Activated CD8-positive, alpha-beta memory T cell treated with anti-CD3 and anti-CD28 coated beads, Interleukin-2, amount 10 ng/mL, durations not matched to agents 7 days and 5 days (primary cell): ENCODE measurements at regions of chr20 and their contacts with region 1.

Region 1: DNA sequence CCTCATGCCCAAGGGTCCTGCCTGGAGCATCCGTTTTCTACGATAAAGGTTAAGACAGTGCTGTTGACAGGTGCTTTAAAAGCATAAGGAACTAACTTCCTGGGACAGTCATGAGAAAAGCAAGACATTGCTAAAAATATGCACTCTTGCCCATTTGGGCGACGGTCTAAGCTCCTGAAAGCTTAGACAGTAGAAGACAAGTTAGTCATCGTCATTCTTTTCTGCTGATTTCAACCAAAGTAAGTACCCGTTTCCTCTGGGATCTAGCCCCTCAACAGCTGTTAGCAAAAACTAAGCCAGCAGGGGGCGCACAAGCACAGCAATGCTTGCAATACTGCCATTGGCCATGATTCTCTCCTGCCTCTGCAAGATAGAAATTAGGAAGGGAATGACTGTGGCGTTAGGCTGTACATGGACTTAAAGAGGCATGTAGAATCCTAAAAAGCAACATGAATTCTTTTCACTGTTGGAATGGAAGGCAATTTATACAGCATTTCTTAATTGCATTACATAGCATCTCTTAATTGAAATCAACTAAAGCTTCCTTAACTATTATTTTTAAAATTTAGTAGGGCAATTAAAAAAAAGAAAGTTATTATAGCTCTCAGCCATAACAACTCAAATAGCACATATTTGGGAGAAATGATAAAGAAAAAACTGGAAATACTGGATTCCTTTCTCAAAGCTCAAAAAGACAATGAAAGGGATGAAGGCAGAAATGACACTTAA is 147.8 kb upstream of the RALGAPA2 start:
- DNase-seq: peak; percentile 87
- ATAC-seq: peak; percentile 76
- H3K4me3 Mint-ChIP-seq: no peak overlapping the region
- H3K27ac Mint-ChIP-seq: no peak overlapping the region
- H3K4me1 Mint-ChIP-seq: no peaks in the 10 kb centered on the region
- H3K27me3 Mint-ChIP-seq: peaks cover 16% of the 10 kb centered on the region

Region 2: DNA sequence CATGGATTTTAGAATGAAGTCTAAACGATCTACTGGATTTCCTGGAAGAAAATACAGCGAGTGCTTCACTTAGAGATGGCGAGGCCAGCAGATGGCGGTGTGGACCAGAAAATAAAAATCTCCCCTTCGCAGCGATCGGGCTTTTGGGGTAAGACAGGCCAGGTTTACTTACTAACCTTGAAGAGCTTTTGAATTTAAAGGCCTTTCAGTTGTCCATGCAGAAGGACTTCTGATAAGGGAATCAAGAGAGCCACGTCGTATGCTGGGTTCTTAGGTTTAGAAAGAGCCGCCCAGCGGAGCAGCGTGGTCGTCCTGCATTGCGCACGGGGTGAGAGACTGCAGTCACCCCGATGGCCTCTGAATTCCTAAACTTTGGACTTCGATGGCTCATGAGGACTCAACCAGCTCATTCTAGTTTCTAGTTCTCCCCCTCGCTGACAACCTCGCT is 22.6 kb before region 1 on chr20:
- CTCF ChIA-PET with region 1: interaction called, 19 read pairs
- DNase-seq: peak; percentile 52
- ATAC-seq: no peak
- H3K4me3 Mint-ChIP-seq: no peak overlapping the region
- H3K27ac Mint-ChIP-seq: no peak overlapping the region
- H3K4me1 Mint-ChIP-seq: no peaks in the 10 kb centered on the region
- H3K27me3 Mint-ChIP-seq: peaks cover 16% of the 10 kb centered on the region

Region 3: GRCh38 chr20:20875716-20876115 is 15.5 kb after region 1 on chr20:
- CTCF ChIA-PET with region 1: interaction called, 15 read pairs
- DNase-seq: no peak
- ATAC-seq: no peak
- H3K4me3 Mint-ChIP-seq: no peak overlapping the region
- H3K27ac Mint-ChIP-seq: no peak overlapping the region
- H3K4me1 Mint-ChIP-seq: no peaks in the 10 kb centered on the region
- H3K27me3 Mint-ChIP-seq: peaks cover 22% of the 10 kb centered on the region